ENCODE measurements at regions of chr12 and their contacts with region 1.

Region 1: DNA sequence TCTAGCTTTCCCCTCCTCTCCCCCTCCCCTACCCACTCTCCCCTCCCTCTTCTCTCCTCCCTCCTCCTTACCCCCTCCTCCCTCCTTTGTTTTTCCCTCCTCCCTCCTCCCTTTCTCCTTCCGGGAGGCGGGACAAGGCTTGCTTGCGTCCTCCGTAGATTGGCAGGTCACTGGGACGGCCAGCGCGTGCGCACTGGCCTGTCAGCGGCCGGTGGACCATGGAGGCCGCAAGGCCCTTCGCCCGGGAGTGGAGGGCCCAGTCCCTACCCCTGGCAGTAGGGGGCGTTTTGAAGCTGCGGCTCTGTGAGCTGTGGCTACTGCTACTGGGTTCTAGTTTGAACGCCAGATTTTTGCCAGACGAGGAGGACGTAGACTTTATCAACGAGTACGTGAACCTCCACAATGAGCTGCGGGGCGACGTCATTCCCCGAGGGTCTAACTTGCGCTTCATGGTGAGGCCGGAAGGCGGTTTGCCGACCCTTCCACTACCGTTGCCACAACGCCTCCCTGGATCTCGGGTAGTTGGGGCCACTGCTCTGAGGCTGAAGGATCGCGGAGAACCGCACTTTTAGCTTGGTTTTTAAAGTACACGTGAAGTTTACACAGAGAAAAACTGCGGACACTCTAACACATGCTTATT is at the start of gene GLIPR1L2:
- DNase-seq: peak; percentile 91
- CTCF ChIP-seq: peak; percentile 85

Region 2: GRCh38 chr12:75177997-75178396 is 213.0 kb before region 1 on chr12:
- CTCF ChIA-PET with region 1: no interaction called
- POLR2A ChIA-PET with region 1: no interaction called
- DNase-seq: no peak
- CTCF ChIP-seq: no peak

Region 3: GRCh38 chr12:75334384-75335030 is 56.5 kb before region 1 on chr12 and contains the start of gene GLIPR1L1:
- CTCF ChIA-PET with region 1: interaction called, 13 read pairs
- POLR2A ChIA-PET with region 1: no interaction called
- DNase-seq: peak; percentile 72
- CTCF ChIP-seq: peak; percentile 82

Region 4: DNA sequence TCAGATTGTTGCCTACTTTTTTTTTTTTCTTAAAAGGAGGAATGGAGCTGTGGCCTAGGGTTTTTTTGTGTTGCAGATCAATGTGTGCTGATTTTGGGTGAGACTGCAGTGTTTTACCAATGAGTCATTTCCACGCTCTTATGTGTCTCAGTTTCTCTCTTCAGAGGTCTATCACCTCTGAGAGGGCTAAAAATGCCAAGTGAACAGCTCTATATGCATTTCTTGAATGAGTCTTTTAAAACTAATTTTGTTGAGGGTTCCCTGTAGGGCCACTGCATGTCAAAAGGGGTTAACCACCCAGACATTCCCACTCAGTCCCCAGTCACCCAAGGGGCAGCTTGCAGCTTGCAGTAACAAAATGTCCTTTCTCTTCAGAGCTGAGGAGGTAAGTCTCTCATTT is 24.4 kb before region 1 on chr12:
- CTCF ChIA-PET with region 1: interaction called, 10 read pairs
- POLR2A ChIA-PET with region 1: no interaction called
- DNase-seq: no peak
- CTCF ChIP-seq: no peak

Region 5: GRCh38 chr12:75378354-75378753 is 12.7 kb before region 1 on chr12:
- CTCF ChIA-PET with region 1: interaction called, 11 read pairs
- POLR2A ChIA-PET with region 1: no interaction called
- DNase-seq: no peak
- CTCF ChIP-seq: no peak

Region 6: GRCh38 chr12:75407683-75408082 is 16.7 kb after region 1 on chr12:
- CTCF ChIA-PET with region 1: interaction called, 10 read pairs
- POLR2A ChIA-PET with region 1: no interaction called
- DNase-seq: no peak
- CTCF ChIP-seq: no peak

Region 7: DNA sequence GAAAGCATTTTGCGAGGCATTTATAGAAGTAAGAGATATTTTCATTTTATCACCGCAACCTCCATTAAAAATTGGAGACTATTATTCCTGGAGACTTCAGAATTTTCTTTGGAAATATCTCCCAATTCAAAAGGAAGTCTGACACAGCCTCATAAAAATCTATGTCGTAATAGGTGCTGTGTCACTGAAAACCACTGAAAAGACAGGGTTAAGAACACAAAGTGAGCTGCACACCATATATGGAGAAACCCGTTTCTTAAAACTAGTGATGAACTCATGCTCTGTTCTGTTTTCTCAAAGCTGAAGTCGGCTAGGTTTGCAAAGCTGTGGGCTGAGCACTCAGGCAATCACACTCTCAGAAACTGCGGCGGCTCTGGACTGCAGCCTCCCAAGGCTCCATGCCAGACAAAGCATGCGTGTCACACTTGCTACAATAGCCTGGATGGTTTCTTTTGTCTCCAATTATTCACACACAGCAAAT is 89.5 kb after region 1 on chr12 and contains the start of gene GLIPR1:
- CTCF ChIA-PET with region 1: interaction called, 23 read pairs
- POLR2A ChIA-PET with region 1: interaction called, 5 read pairs
- DNase-seq: peak; percentile 69
- CTCF ChIP-seq: no peak

Region 8: GRCh38 chr12:75505706-75506312 is 114.8 kb after region 1 on chr12:
- CTCF ChIA-PET with region 1: interaction called, 11 read pairs
- POLR2A ChIA-PET with region 1: no interaction called
- DNase-seq: no peak
- CTCF ChIP-seq: peak; percentile 60

Region 9: GRCh38 chr12:75790219-75790618 is 399.2 kb after region 1 on chr12:
- CTCF ChIA-PET with region 1: no interaction called
- POLR2A ChIA-PET with region 1: no interaction called
- DNase-seq: no peak
- CTCF ChIP-seq: no peak

Measured in GM10248 (cell line).